Activated T-helper 1 cell treated with anti-CD3 and anti-CD28 coated beads, Interleukin-12 subunit alpha, Interleukin-12 subunit beta, Interleukin-2, Interleukin-4 antibody, amounts not matched to agents 30 ng/mL and 10 ng/mL and 1 ng/mL, durations not matched to agents 14 hours and 24 hours and 36 hours (primary cell): ENCODE measurements at regions of chr15 and their contacts with region 1.

Region 1: DNA sequence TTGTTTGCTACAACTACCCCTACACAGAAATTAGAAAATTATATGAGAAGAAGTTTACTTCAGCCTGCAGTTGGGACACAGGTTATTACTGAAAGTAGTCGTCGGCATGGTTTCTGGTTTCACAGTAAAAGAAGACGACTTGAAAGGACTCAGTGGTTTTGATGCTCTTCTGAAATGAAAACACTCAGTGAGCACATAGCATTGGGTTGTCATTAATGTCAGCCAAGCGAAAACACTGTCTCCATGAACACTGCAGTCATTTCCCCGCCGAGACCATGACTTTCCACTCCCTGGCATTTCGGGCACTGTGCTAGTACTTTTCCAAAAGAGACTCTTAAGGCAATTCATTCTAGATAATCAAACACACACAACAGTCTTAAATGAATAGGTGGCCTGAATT is 69.2 kb upstream of the ICE2 start:
- DNase-seq: peak; percentile 54
- H3K4me3 Mint-ChIP-seq: peak overlapping the region; percentile 51
- H3K27ac Mint-ChIP-seq: peak overlapping the region; percentile 93
- H3K4me1 Mint-ChIP-seq: peaks cover 96% of the 10 kb centered on the region
- H3K27me3 Mint-ChIP-seq: no peaks in the 10 kb centered on the region

Region 2: DNA sequence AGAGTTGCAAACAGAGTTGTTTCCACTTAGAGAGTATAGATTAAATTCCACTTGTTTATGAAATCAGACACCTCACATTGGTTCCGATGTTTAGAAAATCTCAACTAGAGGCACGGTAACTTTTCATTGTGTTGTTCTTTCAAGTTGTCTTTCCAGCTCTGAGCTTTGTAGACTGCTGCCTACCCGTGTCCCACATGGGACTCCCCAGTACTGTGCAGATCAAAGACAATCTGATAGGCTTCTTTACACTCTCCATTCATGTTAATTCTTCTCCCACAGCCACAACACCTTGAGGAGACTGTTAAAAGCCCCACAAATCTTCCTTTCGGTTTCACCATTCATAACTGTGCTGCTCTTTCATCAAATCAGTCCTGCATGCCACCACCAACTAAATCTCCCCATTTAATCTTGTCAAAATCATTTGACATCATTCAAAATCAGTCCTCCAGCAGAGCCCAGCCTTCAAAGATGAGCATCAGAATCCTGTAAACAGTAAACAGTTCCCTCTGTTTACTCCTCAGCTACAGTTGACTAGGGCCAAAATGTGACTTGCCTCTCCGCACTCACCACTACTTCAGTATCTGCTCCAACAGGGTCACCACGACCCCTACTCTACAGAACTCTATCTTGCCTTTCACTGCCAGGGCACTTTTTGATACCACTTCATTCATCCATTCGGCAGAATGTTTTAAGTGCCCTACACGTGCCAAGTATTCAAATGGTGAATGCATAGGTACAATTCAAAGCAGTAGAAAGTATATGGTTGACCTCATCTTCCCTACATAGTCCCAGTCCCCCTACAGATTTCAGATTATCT is 158.6 kb before region 1 on chr15:
- intact Hi-C with region 1: loop called (anchors 1 kb)
- DNase-seq: peak; percentile 60
- H3K4me3 Mint-ChIP-seq: peak overlapping the region; percentile 34
- H3K27ac Mint-ChIP-seq: peak overlapping the region; percentile 81
- H3K4me1 Mint-ChIP-seq: peaks cover 73% of the 10 kb centered on the region
- H3K27me3 Mint-ChIP-seq: no peaks in the 10 kb centered on the region

Region 3: DNA sequence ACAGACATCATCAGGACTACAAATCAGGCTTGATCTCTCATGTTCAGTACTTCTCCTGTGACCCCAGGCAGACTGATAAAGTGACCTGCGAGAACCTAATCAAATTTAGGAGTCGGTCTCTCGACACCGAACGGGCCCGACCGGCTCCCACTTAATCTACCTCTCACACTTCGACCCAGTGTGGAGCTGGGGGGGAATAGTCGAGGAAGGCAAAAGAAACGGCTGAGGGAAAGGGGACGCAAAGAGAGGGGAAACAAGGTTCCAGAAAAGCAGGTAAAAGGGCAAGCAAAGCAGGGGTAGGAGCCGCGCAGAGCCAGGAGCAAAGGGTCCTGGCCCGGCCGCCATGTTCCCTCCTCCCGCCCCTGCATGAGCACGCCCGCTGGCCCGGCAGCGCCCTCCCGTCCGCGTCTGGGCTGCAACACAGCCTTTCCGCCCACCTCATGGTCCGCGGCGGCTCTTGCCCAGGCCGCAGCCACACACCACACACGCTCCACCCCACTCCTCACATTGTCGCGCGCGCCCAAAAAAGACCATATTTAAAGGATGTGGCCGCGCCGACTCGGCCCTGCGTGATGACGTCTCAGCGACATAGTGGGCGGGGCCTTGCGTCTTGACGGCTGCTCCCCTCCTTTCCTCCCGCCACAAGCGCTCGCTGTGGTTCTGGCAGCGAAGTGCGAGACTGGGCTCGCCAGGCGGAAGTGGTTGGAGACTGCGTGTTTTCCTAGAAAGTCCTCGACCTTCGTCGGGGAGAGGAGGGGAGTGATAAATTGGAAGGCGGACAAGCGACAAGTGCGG is 69.3 kb before region 1 on chr15 and contains the start of gene ICE2:
- intact Hi-C with region 1: loop called (anchors 1 kb)
- DNase-seq: peak; percentile 95
- H3K4me3 Mint-ChIP-seq: peak within 1 kb of the TSS; percentile 97
- H3K27ac Mint-ChIP-seq: peak within 1 kb of the TSS; percentile 97
- H3K4me1 Mint-ChIP-seq: peaks cover 52% of the 10 kb centered on the region
- H3K27me3 Mint-ChIP-seq: no peaks in the 10 kb centered on the region
- total RNA-seq, gene ICE2: 51.9 and 56.1 TPM in 2 replicates

Region 4: DNA sequence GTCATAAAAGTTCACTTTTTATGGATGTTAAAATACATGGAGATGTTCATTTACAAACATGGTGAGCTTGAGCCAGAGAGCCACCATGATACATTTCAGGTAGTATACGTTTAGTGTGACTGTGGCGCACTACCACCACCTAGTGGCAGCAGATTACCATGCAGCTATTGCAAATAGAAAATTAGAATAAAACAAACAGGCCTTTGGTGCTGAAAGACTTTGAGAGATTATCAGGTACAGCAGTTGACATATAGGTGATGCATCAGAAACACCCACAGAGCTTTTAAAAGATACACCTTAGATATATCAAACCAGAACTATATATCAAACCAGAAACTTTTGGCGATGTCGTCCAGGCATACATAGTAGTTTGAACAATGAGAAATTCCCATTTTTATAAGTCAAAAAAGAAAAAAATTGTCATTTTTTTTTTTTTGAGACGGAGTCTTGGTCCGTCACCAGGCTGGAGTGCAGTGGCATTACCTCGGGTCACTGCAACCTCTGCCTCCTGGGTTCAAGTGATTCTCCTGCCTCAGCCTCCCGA is 27.2 kb before region 1 on chr15:
- intact Hi-C with region 1: loop called (anchors 1 kb)
- DNase-seq: peak; percentile 63
- H3K4me3 Mint-ChIP-seq: no peak overlapping the region
- H3K27ac Mint-ChIP-seq: peak overlapping the region; percentile 71
- H3K4me1 Mint-ChIP-seq: peaks cover 58% of the 10 kb centered on the region
- H3K27me3 Mint-ChIP-seq: no peaks in the 10 kb centered on the region

Region 5: DNA sequence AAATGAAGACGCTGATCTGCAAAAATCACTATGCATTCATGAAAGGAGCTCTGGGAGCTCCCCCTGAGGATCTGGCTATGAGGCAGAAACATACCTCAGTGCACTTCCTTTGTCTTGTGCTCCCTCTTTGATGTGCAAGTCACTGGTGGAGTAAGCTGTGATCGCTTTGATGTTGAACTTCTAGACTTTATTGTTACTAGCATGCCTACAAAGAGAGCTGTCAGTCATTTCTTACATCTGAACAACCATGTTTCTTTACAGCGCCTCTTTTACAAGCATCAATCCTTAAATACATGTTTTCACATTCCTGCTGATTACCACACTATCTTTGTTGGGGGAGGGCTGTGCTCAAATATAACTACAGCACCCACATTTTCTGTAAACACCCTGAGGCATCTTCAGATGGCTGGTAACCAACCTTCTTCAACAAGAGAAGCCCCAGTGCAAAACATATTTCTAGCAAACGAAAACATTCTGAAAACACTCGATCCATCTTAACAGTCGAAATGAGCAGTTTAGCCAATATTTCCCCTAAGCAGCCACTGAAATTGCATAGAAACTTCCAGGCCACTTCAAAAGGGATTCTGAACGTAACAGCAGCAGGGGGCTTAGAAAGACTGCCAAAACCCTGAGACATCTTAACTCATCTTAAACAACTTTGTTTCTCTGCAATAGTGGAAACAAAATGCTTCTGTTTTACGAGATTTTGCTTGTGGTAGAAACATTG is 32.7 kb after region 1 on chr15:
- intact Hi-C with region 1: loop called (anchors 1 kb)
- DNase-seq: peak; percentile 57
- H3K4me3 Mint-ChIP-seq: peak overlapping the region; percentile 74
- H3K27ac Mint-ChIP-seq: peak overlapping the region; percentile 95
- H3K4me1 Mint-ChIP-seq: peaks cover 79% of the 10 kb centered on the region
- H3K27me3 Mint-ChIP-seq: no peaks in the 10 kb centered on the region

Region 6: GRCh38 chr15:60695713-60696522 is 147.8 kb after region 1 on chr15:
- intact Hi-C with region 1: loop called (anchors 2 kb)
- DNase-seq: peak; percentile 48
- H3K4me3 Mint-ChIP-seq: peak overlapping the region; percentile 32
- H3K27ac Mint-ChIP-seq: peak overlapping the region; percentile 75
- H3K4me1 Mint-ChIP-seq: peaks cover 66% of the 10 kb centered on the region
- H3K27me3 Mint-ChIP-seq: no peaks in the 10 kb centered on the region

Region 7: GRCh38 chr15:60798821-60799220 is 250.7 kb after region 1 on chr15:
- intact Hi-C with region 1: loop called (anchors 1 kb)
- DNase-seq: no peak
- H3K4me3 Mint-ChIP-seq: no peak overlapping the region
- H3K27ac Mint-ChIP-seq: peak overlapping the region; percentile 82
- H3K4me1 Mint-ChIP-seq: peaks cover 76% of the 10 kb centered on the region
- H3K27me3 Mint-ChIP-seq: no peaks in the 10 kb centered on the region